ENCODE measurements at regions of chr17 and their contacts with region 1.

Region 1: GRCh38 chr17:65147955-65148354 is 10.8 kb downstream of the RGS9 start:
- DNase-seq: no peak

Region 2: DNA sequence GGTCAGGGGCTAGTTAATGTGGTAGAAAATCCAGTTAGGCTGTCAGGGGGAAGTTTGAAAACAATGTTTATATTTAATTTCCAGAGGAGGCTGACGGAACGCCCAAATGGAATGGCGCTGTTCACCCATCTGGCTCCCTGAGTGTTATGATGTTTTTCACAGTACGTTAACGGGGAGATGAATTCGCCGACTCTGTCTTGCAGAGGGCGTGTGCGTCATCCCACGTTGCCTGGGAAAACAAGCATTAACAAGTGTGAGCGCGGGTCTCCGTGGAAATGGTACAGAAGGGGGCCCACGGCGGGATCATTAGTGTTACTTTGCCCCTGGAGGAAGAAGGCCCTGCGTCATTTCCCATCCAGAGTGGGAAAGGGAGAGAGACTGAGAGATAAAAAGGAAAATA is 18.8 kb after region 1 on chr17:
- intact Hi-C with region 1: loop called in 1 of 2 experiments (anchors 1 kb)
- DNase-seq: no peak